Activated CD8-positive, alpha-beta T cell treated with anti-CD3 and anti-CD28 coated beads for 36 hours (primary cell): ENCODE measurements at regions of chr7 and their contacts with region 1.

Region 1: DNA sequence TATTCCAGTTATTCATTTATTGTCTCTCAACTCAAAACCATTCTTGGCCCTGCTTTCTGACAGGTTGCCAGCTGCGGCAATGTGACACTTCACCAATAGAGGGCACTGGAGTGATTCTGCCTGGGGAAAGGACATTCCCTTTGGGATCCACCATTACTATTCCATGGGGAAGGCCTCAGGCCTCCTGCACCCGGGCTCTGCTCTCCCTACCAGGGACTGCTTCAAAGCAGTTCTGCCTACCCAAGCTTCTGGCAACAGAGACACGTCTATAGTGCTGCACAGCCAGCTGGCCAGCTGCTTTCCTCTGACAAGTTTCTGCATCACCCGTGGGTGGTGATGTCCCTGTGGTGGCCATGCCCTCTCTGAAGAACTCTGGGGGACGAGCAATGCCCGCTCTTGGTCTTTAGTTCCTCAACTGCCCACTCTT is 163.8 kb downstream of the ELMO1 start:
- DNase-seq: peak; percentile 36
- ATAC-seq: peak; percentile 27
- H3K4me3 Mint-ChIP-seq: no peak overlapping the region
- H3K27ac Mint-ChIP-seq: no peak overlapping the region
- H3K4me1 Mint-ChIP-seq: peaks cover 33% of the 10 kb centered on the region
- H3K27me3 Mint-ChIP-seq: no peaks in the 10 kb centered on the region
- CTCF ChIP-seq: peak; percentile 86

Region 2: DNA sequence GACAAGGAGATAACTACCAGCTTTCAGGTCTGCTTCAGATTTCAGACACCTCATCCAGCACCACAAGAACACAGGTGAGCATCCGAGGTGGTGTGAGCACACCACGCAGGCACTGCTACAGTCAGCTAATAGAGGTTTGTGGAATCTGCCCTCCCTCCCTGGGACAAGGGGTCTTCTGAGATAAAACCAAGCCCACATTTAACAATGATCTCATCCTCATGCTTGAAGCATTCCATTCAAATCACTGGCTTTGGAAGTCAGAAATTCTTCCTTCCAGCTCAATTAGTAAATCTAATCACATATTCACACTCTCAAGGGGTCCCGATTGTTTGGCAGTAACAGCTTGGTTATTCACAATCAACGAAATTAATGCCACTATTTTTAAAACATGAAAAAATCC is 167.5 kb before region 1 on chr7:
- CTCF ChIA-PET with region 1: no interaction called
- POLR2A ChIA-PET with region 1: no interaction called
- intact Hi-C with region 1: no loop called
- DNase-seq: no peak
- ATAC-seq: no peak
- H3K4me3 Mint-ChIP-seq: no peak overlapping the region
- H3K27ac Mint-ChIP-seq: no peak overlapping the region
- H3K4me1 Mint-ChIP-seq: peaks cover 45% of the 10 kb centered on the region
- H3K27me3 Mint-ChIP-seq: no peaks in the 10 kb centered on the region
- CTCF ChIP-seq: no peak

Region 3: DNA sequence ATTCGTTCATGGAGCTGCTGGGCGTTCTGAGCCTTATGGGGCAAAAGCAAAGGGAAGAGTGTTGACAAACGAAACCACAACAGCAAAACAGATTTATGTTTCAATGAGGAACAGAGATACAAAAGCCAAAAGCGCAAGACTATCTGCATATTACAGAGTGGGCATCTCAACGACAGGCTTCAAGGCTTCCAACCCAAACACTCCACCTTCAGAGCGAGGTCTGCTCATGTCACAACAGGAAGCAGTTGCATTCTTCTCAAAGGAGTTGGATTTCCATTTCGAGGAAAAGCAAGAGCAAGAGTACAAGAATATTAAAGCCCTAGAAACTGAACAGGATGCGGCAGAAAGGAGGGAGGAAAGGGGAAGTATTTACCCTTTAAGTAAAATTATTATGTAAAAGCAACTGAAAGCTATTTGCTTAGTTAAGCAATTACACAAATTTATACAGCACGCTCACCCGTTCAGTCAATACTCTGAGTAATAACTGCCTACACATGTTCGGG is 25.4 kb before region 1 on chr7:
- CTCF ChIA-PET with region 1: no interaction called
- POLR2A ChIA-PET with region 1: no interaction called
- intact Hi-C with region 1: no loop called
- DNase-seq: no peak
- ATAC-seq: no peak
- H3K4me3 Mint-ChIP-seq: no peak overlapping the region
- H3K27ac Mint-ChIP-seq: no peak overlapping the region
- H3K4me1 Mint-ChIP-seq: peaks cover 12% of the 10 kb centered on the region
- H3K27me3 Mint-ChIP-seq: no peaks in the 10 kb centered on the region
- CTCF ChIP-seq: no peak

Region 4: DNA sequence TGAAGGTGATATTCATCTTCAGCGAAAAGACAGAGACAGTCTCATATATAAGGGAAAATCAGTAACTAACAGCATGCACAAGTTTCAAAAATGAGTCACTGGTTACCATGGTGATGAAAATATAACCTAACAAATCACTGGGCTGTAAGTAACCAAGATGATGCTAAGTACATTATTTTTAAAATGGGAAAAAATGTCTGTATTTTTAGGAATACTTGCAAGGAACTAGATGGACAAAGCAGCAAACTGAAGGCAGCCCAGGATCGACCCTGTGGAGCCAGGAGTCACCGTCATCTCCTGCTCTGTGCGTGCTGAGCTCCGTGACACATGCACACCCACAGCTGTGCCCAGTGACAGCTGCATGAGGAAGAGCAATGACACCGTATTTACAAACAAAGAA is 26.5 kb after region 1 on chr7:
- CTCF ChIA-PET with region 1: interaction called, 16 read pairs
- POLR2A ChIA-PET with region 1: no interaction called
- intact Hi-C with region 1: no loop called
- DNase-seq: peak; percentile 28
- ATAC-seq: peak; percentile 68
- H3K4me3 Mint-ChIP-seq: no peak overlapping the region
- H3K27ac Mint-ChIP-seq: peak overlapping the region; percentile 60
- H3K4me1 Mint-ChIP-seq: peaks cover 73% of the 10 kb centered on the region
- H3K27me3 Mint-ChIP-seq: no peaks in the 10 kb centered on the region
- CTCF ChIP-seq: no peak

Region 5: GRCh38 chr7:37510043-37510634 is 225.3 kb after region 1 on chr7:
- CTCF ChIA-PET with region 1: interaction called, 15 read pairs
- POLR2A ChIA-PET with region 1: no interaction called
- intact Hi-C with region 1: no loop called
- DNase-seq: peak; percentile 45
- ATAC-seq: peak; percentile 80
- H3K4me3 Mint-ChIP-seq: no peak overlapping the region
- H3K27ac Mint-ChIP-seq: no peak overlapping the region
- H3K4me1 Mint-ChIP-seq: no peaks in the 10 kb centered on the region
- H3K27me3 Mint-ChIP-seq: peaks cover 4% of the 10 kb centered on the region
- CTCF ChIP-seq: peak; percentile 87